Colonic mucosa (tissue), 4 donors: ENCODE measurements at regions of chr11 and their contacts with region 1.

Region 1: DNA sequence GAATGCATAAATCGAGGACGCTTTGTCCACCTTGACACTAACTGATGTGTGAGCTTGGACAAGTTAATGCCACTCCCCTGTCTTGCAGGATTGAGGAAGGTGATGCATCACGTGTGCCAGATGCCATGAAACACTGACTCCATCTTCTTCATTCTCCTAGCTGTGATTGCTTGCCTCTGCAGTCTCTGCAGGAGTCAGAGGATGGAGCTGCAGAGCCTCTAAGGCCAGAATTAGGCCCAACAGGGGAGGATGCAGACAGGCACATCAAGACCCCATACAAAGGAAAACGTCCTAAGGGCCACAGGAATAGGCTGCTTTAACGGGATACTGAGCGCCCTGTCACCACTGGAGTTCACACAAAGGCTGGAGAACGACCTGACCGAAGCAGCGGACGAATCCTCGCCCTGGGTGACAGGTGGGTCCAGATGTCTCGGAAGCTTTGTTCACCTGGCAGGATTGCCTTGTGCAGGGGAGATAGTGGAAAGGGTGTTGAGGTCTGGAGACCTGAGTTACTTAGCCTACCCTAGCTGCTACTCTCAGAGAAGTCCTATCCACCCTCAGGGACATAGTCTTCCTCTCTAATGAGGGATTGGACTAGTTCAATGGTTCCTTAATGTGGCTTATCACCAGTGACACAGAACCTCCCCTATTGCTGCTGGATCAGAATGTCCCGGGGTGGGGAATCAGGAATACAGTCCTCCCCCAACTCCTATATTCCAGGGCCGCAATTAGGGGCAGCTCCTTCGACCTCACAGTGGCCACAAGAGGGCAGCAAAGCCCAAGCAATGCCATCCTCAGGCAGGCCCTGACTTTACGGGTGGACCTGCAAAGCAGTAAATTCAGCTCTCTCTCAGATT is 32.4 kb downstream of the DBX1 start:
- DNase-seq: peak; percentile 77
- H3K4me3 ChIP-seq: no peak overlapping the region
- H3K27ac ChIP-seq: no peak overlapping the region
- H3K4me1 ChIP-seq: no peaks in the 10 kb centered on the region
- H3K27me3 ChIP-seq: no peaks in the 10 kb centered on the region
- CTCF ChIP-seq: peak; percentile 76

Region 2: GRCh38 chr11:19951558-19952115 is 176.3 kb before region 1 on chr11:
- intact Hi-C with region 1: loop called (anchors 5 kb)
- DNase-seq: no peak
- H3K4me3 ChIP-seq: no peak overlapping the region
- H3K27ac ChIP-seq: no peak overlapping the region
- H3K4me1 ChIP-seq: peaks cover 4% of the 10 kb centered on the region
- H3K27me3 ChIP-seq: no peaks in the 10 kb centered on the region
- CTCF ChIP-seq: peak; percentile 54

Region 3: GRCh38 chr11:20355221-20356219 is 227.6 kb after region 1 on chr11:
- intact Hi-C with region 1: loop called (anchors 5 kb)
- DNase-seq: peak; percentile 63
- H3K4me3 ChIP-seq: no peak overlapping the region
- H3K27ac ChIP-seq: no peak overlapping the region
- H3K4me1 ChIP-seq: no peaks in the 10 kb centered on the region
- H3K27me3 ChIP-seq: no peaks in the 10 kb centered on the region
- CTCF ChIP-seq: peak; percentile 38

Region 4: DNA sequence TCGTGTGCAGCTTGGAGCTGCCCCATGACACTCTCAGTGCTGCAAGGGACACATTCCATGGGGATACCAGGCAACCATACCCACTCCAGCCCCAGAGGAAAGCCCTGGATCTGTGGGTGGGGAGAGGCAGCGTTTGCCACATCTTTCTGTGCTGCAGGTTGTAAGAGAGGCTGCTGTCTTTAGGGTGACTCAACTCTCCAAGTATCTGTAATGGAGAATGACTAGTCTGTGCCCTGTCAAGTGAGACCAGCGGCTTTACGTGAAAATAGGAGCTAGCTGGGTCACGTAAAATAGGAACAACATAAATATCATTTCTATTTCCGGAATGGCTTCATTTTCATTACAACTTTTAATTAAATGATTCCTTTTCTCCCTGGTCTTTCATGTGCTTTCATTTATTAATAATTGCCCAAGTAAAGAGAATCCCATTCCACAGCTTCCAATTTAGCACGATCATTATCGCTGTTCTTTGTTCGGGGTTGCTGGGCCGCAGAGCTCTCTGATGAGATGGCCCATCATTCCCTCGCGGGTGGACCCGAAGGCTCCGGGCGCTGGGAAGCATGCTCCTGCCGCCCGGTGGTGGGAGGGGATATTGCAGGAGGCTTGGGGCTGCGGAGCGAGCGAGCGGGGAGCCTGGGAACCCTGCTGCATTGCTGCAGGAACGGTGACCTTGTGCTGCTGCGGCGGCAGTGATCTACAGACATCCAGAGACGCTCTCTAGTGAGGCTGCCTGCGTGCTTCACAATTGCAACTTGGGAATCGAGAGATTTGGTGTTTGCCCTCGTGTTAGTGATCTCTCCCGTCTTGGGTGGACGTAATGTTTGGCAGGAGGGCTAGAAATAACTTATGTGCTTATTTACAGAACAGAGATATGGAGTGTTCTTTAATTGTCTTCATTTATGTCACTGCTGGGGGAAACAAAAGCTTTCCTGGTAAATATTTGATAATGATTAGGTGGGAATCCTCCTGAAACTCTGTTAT is 482.1 kb after region 1 on chr11:
- intact Hi-C with region 1: loop called (anchors 5 kb)
- DNase-seq: peak; percentile 63
- H3K4me3 ChIP-seq: no peak overlapping the region
- H3K27ac ChIP-seq: no peak overlapping the region
- H3K4me1 ChIP-seq: no peaks in the 10 kb centered on the region
- H3K27me3 ChIP-seq: peaks cover 15% of the 10 kb centered on the region
- CTCF ChIP-seq: peak; percentile 92